ENCODE measurements at regions of chr2 and their contacts with region 1.

Region 1: GRCh38 chr2:206531996-206532543 is 88.7 kb downstream of the ADAM23 start:
- DNase-seq: no peak
- H3K4me3 ChIP-seq: no peak overlapping the region
- H3K4me3 Mint-ChIP-seq: peak overlapping the region in 1 of 8 donors; percentile 18
- H3K27ac ChIP-seq: no peak overlapping the region
- H3K27ac Mint-ChIP-seq: peak overlapping the region; percentile 2 to 85 (median 31)
- H3K4me1 ChIP-seq: peaks cover 18% of the 10 kb centered on the region
- H3K4me1 Mint-ChIP-seq: peaks cover 19 to 55% (median 35%) of the 10 kb centered on the region in 4 donors
- H3K27me3 ChIP-seq: no peaks in the 10 kb centered on the region
- H3K27me3 Mint-ChIP-seq: peaks cover 0 to 3% of the 10 kb centered on the region in 2 donors

Region 2: DNA sequence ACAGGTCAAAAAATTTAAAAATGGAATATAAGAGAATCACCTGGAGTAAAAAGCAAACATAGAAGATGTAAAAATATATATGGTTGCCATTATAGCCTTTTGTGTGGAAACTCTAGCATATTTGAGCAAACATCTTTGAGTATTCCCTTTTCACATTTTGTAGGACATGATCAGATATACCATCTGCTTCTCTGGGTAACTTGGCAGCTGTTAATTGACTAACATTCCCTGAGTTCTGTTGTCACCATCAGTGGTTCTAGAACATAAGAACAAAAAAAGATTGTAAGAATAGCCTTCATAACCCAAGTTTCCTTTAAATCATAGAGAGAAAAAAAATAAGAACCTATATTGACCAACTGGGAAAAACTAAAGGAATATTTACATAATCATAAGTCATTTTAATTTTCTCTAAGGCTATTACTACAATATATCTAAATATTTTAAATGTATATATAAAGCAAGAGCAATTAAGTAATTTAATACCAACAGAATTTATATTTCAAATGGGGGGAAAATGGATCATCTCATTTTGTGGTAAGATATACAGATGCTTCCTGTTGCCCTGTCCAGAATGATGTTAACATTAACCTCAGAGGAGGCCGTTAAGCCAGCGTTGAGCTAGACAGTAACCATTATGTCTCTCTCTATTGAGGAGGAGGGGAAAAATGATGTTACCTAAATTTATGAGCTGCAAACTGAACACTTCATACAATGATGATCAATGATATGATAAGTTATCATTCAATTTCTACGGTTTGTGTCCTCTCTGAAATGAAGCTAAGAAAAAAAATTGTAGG is 436.3 kb before region 1 on chr2:
- CTCF ChIA-PET with region 1: no interaction called
- POLR2A ChIA-PET with region 1: no interaction called
- intact Hi-C with region 1: no loop called
- DNase-seq: no peak
- H3K4me3 ChIP-seq: no peak overlapping the region
- H3K4me3 Mint-ChIP-seq: no peak overlapping the region
- H3K27ac ChIP-seq: no peak overlapping the region
- H3K27ac Mint-ChIP-seq: no peak overlapping the region
- H3K4me1 ChIP-seq: no peaks in the 10 kb centered on the region
- H3K4me1 Mint-ChIP-seq: peaks cover 0 to 2% (median under 1%) of the 10 kb centered on the region in 4 donors
- H3K27me3 ChIP-seq: no peaks in the 10 kb centered on the region
- H3K27me3 Mint-ChIP-seq: no peaks in the 10 kb centered on the region

Region 3: DNA sequence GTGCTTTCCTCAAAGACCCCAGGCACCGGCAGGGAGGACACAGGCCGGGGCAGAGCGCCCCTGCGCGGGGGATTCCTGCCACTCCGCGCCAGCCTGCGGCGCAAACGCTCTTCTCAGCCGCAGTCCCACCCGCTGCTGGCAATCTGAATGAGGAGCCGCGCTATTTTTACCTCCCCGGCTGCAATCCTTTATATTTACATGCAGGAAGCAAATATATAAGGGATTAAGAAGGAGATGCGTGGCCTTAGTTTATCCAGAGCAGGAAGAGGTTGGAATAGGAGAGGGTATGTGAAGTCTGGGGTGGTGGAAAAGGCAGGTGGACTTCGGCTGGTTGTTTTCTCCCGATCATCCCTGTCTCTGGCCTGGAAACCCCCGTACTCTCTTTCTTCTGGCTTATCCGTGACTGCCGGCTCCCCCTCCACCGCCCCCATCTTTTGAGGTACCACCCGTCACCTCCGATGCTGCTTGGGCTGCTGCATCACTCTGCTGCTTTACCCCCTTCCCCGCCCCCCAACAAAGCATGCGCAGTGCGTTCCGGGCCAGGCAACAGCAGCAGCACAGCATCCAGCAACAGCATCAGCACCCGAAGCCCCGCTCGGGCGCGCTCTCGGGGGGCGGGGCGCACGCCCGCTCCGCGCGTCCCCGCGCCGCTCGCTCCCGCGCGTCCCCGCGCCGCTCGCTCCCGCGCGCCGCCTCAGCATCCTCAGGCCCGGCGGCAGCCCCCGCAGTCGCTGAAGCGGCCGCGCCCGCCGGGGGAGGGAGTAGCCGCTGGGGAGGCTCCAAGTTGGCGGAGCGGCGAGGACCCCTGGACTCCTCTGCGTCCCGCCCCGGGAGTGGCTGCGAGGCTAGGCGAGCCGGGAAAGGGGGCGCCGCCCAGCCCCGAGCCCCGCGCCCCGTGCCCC is 89.0 kb before region 1 on chr2 and contains the start of gene ADAM23:
- CTCF ChIA-PET with region 1: no interaction called
- POLR2A ChIA-PET with region 1: no interaction called
- intact Hi-C with region 1: loop called (anchors 2 kb)
- DNase-seq: peak; percentile 47 to 79 (median 54)
- H3K4me3 ChIP-seq: peak within 1 kb of the TSS in 1 of 2 donors; percentile 36
- H3K4me3 Mint-ChIP-seq: peak within 1 kb of the TSS; percentile 76 to 93 (median 88)
- H3K27ac ChIP-seq: no peak within 1 kb of the TSS
- H3K27ac Mint-ChIP-seq: peak within 1 kb of the TSS in 5 of 7 donors; percentile 37 to 87 (median 76)
- H3K4me1 ChIP-seq: peaks cover 13% of the 10 kb centered on the region
- H3K4me1 Mint-ChIP-seq: peaks cover 9 to 28% (median 15%) of the 10 kb centered on the region in 4 donors
- H3K27me3 ChIP-seq: peaks cover 10% of the 10 kb centered on the region
- H3K27me3 Mint-ChIP-seq: peaks cover 40 to 50% of the 10 kb centered on the region in 2 donors
- total RNA-seq, gene ADAM23: 28.1 to 31.3 TPM

Region 4: DNA sequence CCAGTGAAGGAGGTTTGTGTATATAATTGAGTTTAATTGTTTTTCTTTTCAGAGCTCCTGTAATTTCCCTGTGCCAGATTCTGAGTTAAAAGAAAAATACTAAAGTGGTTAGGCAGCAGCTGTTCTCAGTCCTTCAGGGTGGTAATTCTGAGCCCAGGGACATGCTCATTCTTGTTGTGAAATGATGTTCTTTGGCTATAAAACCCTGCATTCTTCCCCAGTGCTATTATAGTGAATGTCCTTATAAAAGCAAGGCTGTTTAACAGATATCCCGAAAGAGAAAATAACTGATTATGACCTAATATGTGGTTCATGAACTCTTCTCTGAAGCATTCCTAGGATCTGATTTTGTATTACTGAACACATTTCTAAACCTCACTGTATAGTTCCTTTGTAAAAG is 54.8 kb before region 1 on chr2:
- CTCF ChIA-PET with region 1: no interaction called
- POLR2A ChIA-PET with region 1: no interaction called
- intact Hi-C with region 1: no loop called
- DNase-seq: no peak
- H3K4me3 ChIP-seq: no peak overlapping the region
- H3K4me3 Mint-ChIP-seq: no peak overlapping the region
- H3K27ac ChIP-seq: no peak overlapping the region
- H3K27ac Mint-ChIP-seq: no peak overlapping the region
- H3K4me1 ChIP-seq: no peaks in the 10 kb centered on the region
- H3K4me1 Mint-ChIP-seq: no peaks in the 10 kb centered on the region
- H3K27me3 ChIP-seq: no peaks in the 10 kb centered on the region
- H3K27me3 Mint-ChIP-seq: peaks cover 3 to 4% of the 10 kb centered on the region in 2 donors